ENCODE measurements at regions of chr9 and their contacts with region 1.

Region 1: GRCh38 chr9:124257844-124258606 is at the start of gene NEK6:
- DNase-seq: no peak
- H3K4me3 ChIP-seq: peak within 1 kb of the TSS; percentile 72
- H3K27ac ChIP-seq: peak within 1 kb of the TSS; percentile 72
- H3K4me1 ChIP-seq: peaks cover 43% of the 10 kb centered on the region
- H3K27me3 ChIP-seq: no peaks in the 10 kb centered on the region
- CTCF ChIP-seq: no peak
- total RNA-seq, gene NEK6: 48.1 and 57.9 TPM in 2 replicates

Region 2: DNA sequence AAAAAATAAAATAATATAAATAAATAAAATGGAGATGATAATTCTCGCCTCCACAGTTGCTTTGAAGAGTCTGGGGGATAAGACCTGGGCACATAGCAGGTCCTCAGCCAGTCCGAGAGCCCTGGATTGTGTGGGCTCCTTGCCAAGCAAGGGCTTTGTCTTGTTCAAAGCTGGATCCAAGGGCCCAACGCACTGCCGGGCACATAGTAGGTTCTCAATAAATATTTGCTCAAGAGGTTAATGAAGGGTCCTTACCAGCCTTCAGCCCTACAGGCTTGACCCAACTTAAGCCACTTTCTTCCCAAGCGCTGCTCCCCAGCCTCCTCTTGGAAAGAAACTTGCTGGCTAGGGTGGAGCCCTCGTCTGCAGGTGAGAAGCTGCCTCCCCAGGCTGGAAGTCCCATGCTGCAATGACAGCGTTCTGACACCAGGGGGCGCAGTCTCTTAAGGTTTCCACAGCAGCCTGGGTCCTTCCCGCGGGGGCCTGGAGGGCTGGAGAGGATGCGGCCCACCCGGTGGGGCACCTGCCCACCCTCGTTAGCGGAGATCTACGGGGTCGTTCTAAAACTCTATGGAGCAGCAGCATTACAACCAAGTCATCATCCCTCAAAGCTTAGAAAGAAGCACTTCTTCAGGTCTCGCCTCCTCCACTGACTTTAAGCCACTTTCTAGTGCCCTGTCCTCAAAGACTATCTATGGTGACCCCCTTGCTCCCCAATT is 131.3 kb before region 1 on chr9:
- CTCF ChIA-PET with region 1: no interaction called
- POLR2A ChIA-PET with region 1: no interaction called
- intact Hi-C with region 1: loop called (anchors 5 kb)
- DNase-seq: peak; percentile 67 to 81
- H3K4me3 ChIP-seq: no peak overlapping the region
- H3K27ac ChIP-seq: no peak overlapping the region
- H3K4me1 ChIP-seq: no peaks in the 10 kb centered on the region
- H3K27me3 ChIP-seq: no peaks in the 10 kb centered on the region
- CTCF ChIP-seq: peak; percentile 99

Region 3: DNA sequence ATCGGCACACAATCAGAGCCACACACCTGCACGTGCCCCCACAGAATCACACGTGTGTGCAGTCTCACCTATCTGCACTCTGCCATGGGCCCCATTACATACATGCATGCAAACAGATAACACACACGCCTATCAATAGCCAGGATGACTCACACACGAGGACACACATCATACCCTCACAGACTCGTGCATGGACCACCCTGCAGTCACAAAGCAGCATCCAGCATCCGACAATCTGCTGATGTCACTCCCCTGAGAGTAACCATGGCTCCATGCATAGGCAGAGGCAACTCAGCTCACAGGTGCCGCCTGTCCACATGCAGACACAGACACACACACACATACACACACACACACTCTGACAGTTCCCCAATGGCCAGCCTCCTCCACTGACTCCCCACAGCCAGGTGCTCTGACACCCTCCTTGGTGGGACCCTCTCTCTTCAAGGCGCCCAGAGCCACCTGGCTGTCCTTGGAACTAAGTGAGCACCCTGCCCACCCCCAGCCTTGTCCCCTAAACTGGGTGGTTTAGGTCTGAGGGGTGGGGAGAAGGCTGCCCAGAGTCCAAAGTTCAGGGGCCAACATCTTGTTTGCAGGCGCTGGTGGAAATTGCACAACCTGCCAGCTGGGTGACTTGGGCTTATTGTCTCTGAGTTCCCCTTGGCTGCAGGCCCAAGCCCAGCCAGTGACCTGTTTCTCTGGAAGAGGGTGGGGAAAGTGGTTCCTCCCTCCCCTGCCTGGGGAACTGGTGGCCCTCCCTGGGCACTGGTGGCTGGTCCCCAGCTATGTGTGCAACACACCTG is 34.9 kb before region 1 on chr9:
- CTCF ChIA-PET with region 1: no interaction called
- POLR2A ChIA-PET with region 1: no interaction called
- intact Hi-C with region 1: loop called (anchors 2 kb)
- DNase-seq: peak; percentile 81 to 87
- H3K4me3 ChIP-seq: no peak overlapping the region
- H3K27ac ChIP-seq: no peak overlapping the region
- H3K4me1 ChIP-seq: peaks cover 46% of the 10 kb centered on the region
- H3K27me3 ChIP-seq: no peaks in the 10 kb centered on the region
- CTCF ChIP-seq: no peak

Region 4: DNA sequence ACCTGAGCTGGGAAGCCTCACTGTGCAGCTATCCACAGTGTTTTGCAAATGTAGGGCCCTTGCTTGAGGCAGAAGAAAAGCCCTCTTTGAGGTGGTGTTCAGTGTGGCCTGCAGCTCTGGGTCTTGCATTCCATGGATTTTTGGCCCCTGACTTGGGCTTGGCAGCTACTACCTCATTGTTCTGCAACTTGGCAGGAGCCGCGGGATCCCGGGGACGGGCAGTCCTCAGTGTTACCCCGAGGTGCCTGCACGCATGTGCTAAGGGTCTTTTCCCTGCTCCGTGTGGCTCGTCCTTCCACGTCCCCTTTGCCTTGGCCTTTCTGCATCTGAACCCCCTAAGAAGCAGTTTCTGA is 39.5 kb after region 1 on chr9:
- CTCF ChIA-PET with region 1: no interaction called
- POLR2A ChIA-PET with region 1: interaction called, 5 read pairs
- intact Hi-C with region 1: loop called (anchors 1 kb)
- DNase-seq: peak; percentile 92 to 94
- H3K4me3 ChIP-seq: no peak overlapping the region
- H3K27ac ChIP-seq: 0 out of 2 replicates have a peak overlapping the region, but pooled peaks have one; percentile 6
- H3K4me1 ChIP-seq: peaks cover 66% of the 10 kb centered on the region
- H3K27me3 ChIP-seq: no peaks in the 10 kb centered on the region
- CTCF ChIP-seq: no peak

Region 5: GRCh38 chr9:124602204-124602603 is 344.2 kb after region 1 on chr9:
- CTCF ChIA-PET with region 1: no interaction called
- POLR2A ChIA-PET with region 1: no interaction called
- intact Hi-C with region 1: no loop called
- DNase-seq: peak in 1 of 2 experiments; percentile 40
- H3K4me3 ChIP-seq: no peak overlapping the region
- H3K27ac ChIP-seq: no peak overlapping the region
- H3K4me1 ChIP-seq: 0 out of 2 replicates have a peak, but pooled peaks cover 3% of the 10 kb centered on the region
- H3K27me3 ChIP-seq: no peaks in the 10 kb centered on the region
- CTCF ChIP-seq: no peak

Region 6: DNA sequence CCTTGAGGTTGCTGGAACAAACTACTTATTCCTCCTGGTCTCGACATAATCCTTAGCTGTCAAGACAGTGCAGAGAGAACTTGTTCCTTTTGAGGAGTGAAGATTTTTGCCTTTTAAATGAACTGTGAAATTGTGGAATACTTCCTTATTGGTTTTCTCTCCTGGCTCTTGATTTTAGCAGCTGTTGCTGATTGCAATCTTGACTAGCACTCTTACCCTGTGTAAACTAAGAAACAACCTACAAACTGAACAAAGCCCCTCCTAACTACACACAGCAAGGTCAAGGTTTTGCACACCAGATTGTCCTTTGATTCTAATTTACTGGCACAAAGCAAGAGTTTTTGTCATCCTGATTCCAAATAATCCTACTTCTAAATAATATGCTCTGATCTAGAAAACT is 766.9 kb after region 1 on chr9:
- CTCF ChIA-PET with region 1: no interaction called
- POLR2A ChIA-PET with region 1: no interaction called
- intact Hi-C with region 1: no loop called
- DNase-seq: no peak
- H3K4me3 ChIP-seq: no peak overlapping the region
- H3K27ac ChIP-seq: no peak overlapping the region
- H3K4me1 ChIP-seq: no peaks in the 10 kb centered on the region
- H3K27me3 ChIP-seq: no peaks in the 10 kb centered on the region
- CTCF ChIP-seq: no peak